ENCODE measurements at regions of chr1 and their contacts with region 1.

Region 1: GRCh38 chr1:67664048-67664447 is 21.0 kb upstream of the GADD45A start:
- DNase-seq: no peak
- H3K4me3 ChIP-seq: no peak overlapping the region
- H3K27ac ChIP-seq: no peak overlapping the region
- H3K4me1 ChIP-seq: no peaks in the 10 kb centered on the region
- CTCF ChIP-seq: no peak

Region 2: GRCh38 chr1:67646145-67647035 is 17.7 kb before region 1 on chr1:
- CTCF ChIA-PET with region 1: no interaction called
- POLR2A ChIA-PET with region 1: no interaction called
- intact Hi-C with region 1: no loop called
- DNase-seq: no peak
- H3K4me3 ChIP-seq: no peak overlapping the region
- H3K27ac ChIP-seq: no peak overlapping the region
- H3K4me1 ChIP-seq: no peaks in the 10 kb centered on the region
- CTCF ChIP-seq: no peak

Region 3: GRCh38 chr1:67674260-67675011 is 10.4 kb after region 1 on chr1:
- CTCF ChIA-PET with region 1: no interaction called
- POLR2A ChIA-PET with region 1: interaction called, 11 read pairs
- intact Hi-C with region 1: loop called (anchors 1 kb)
- DNase-seq: peak; percentile 77
- H3K4me3 ChIP-seq: peak overlapping the region; percentile 20
- H3K27ac ChIP-seq: peak overlapping the region; percentile 85
- H3K4me1 ChIP-seq: peaks cover 48% of the 10 kb centered on the region
- CTCF ChIP-seq: no peak